SK-N-SH (cell line): ENCODE measurements at regions of chr3 and their contacts with region 1.

Region 1: GRCh38 chr3:124761250-124761796 is 31.1 kb downstream of the UMPS start:
- DNase-seq: peak; percentile 77
- H3K4me3 ChIP-seq: no peak overlapping the region
- H3K27ac ChIP-seq: peak overlapping the region; percentile 4 to 74; a peak in 2 of 4 replicates
- H3K4me1 ChIP-seq: peaks cover 9 to 47% of the 10 kb centered on the region in 2 experiments; a peak in 3 of 4 replicates
- H3K27me3 ChIP-seq: no peaks in the 10 kb centered on the region
- CTCF ChIP-seq: peak; percentile 98
- EP300 ChIP-seq: no peak
- RAD21 ChIP-seq: peak; percentile 96

Region 2: GRCh38 chr3:124741027-124741426 is 20.3 kb before region 1 on chr3:
- CTCF ChIA-PET with region 1: interaction called, 17 read pairs
- POLR2A ChIA-PET with region 1: no interaction called
- DNase-seq: no peak
- H3K4me3 ChIP-seq: no peak overlapping the region
- H3K27ac ChIP-seq: no peak overlapping the region
- H3K4me1 ChIP-seq: no peaks in the 10 kb centered on the region
- H3K27me3 ChIP-seq: no peaks in the 10 kb centered on the region
- CTCF ChIP-seq: no peak
- EP300 ChIP-seq: no peak
- RAD21 ChIP-seq: no peak

Region 3: GRCh38 chr3:124786441-124787241 is 25.3 kb after region 1 on chr3:
- CTCF ChIA-PET with region 1: interaction called, 40 read pairs
- POLR2A ChIA-PET with region 1: no interaction called
- DNase-seq: no peak
- H3K4me3 ChIP-seq: no peak overlapping the region
- H3K27ac ChIP-seq: peak overlapping the region; percentile 47 to 83; a peak in 3 of 4 replicates
- H3K4me1 ChIP-seq: peaks cover 21 to 33% of the 10 kb centered on the region in 2 experiments
- H3K27me3 ChIP-seq: no peaks in the 10 kb centered on the region
- CTCF ChIP-seq: peak; percentile 66
- EP300 ChIP-seq: no peak
- RAD21 ChIP-seq: peak; percentile 63

Region 4: GRCh38 chr3:124905849-124906248 is 144.5 kb after region 1 on chr3:
- CTCF ChIA-PET with region 1: interaction called, 332 read pairs
- POLR2A ChIA-PET with region 1: interaction called, 3 read pairs
- DNase-seq: no peak
- H3K4me3 ChIP-seq: no peak overlapping the region
- H3K27ac ChIP-seq: no peak overlapping the region
- H3K4me1 ChIP-seq: no peaks in the 10 kb centered on the region; a peak in 1 of 4 replicates
- H3K27me3 ChIP-seq: no peaks in the 10 kb centered on the region
- CTCF ChIP-seq: no peak
- EP300 ChIP-seq: no peak
- RAD21 ChIP-seq: no peak

Region 5: GRCh38 chr3:124935264-124935663 is 173.9 kb after region 1 on chr3:
- CTCF ChIA-PET with region 1: interaction called, 17 read pairs
- POLR2A ChIA-PET with region 1: no interaction called
- DNase-seq: no peak
- H3K4me3 ChIP-seq: no peak overlapping the region
- H3K27ac ChIP-seq: no peak overlapping the region
- H3K4me1 ChIP-seq: peaks cover 0 to 4% of the 10 kb centered on the region in 2 experiments; a peak in 1 of 4 replicates
- H3K27me3 ChIP-seq: no peaks in the 10 kb centered on the region
- CTCF ChIP-seq: no peak
- EP300 ChIP-seq: no peak
- RAD21 ChIP-seq: no peak

Region 6: DNA sequence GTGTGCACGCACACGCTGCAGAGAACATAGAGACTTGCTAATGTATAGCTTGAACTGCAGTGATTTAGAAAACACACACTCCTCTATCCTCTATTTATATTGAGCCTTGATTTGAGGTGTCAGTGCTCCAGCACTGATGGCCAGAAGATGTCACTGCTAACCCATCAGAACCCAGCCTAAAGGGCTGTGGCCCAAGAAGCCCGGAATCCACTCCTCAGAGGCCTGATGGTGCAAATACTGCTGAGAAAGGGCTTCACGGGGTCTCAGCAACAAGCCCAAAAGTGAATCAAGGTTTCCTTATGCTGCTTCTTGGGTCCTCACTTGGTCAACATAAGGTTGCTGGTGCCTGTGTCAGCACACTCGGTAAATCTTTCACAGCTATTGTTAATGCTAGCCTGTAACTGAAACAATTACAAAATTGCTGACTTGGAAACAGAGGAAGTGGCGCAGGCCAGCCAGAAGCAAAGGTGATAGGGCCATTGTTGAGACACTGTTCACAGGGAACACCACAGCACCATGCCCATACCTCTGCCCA is 234.2 kb after region 1 on chr3:
- CTCF ChIA-PET with region 1: interaction called, 15 read pairs
- POLR2A ChIA-PET with region 1: no interaction called
- DNase-seq: peak; percentile 73
- H3K4me3 ChIP-seq: no peak overlapping the region; a peak in 1 of 4 replicates
- H3K27ac ChIP-seq: no peak overlapping the region
- H3K4me1 ChIP-seq: peaks cover 0 to 38% of the 10 kb centered on the region in 2 experiments; a peak in 2 of 4 replicates
- H3K27me3 ChIP-seq: no peaks in the 10 kb centered on the region
- CTCF ChIP-seq: peak; percentile 69
- EP300 ChIP-seq: no peak
- RAD21 ChIP-seq: peak; percentile 96